BJ (cell line): ENCODE measurements at regions of chr1 and their contacts with region 1.

Region 1: GRCh38 chr1:84700070-84700469 is 9.8 kb upstream of the SSX2IP start:
- DNase-seq: no peak
- H3K4me3 ChIP-seq: no peak overlapping the region
- H3K27me3 ChIP-seq: no peaks in the 10 kb centered on the region
- CTCF ChIP-seq: no peak

Region 2: GRCh38 chr1:84715342-84716019 is 15.4 kb after region 1 on chr1:
- CTCF ChIA-PET with region 1: interaction called, 3 read pairs
- POLR2A ChIA-PET with region 1: interaction called, 10 read pairs
- DNase-seq: no peak
- H3K4me3 ChIP-seq: no peak overlapping the region
- H3K27me3 ChIP-seq: no peaks in the 10 kb centered on the region
- CTCF ChIP-seq: no peak